Caco-2 (cell line): ENCODE measurements at regions of chr3 and their contacts with region 1.

Region 1: GRCh38 chr3:56042326-56042951 is 425.8 kb downstream of the ERC2 start:
- DNase-seq: peak in 1 of 2 experiments; percentile 47
- H3K4me3 ChIP-seq: no peak overlapping the region
- H3K4me3 Mint-ChIP-seq: no peak overlapping the region
- H3K27ac Mint-ChIP-seq: no peak overlapping the region
- H3K4me1 ChIP-seq: peaks cover 36% of the 10 kb centered on the region
- H3K4me1 Mint-ChIP-seq: peaks cover 5% of the 10 kb centered on the region
- H3K27me3 ChIP-seq: no peaks in the 10 kb centered on the region
- H3K27me3 Mint-ChIP-seq: no peaks in the 10 kb centered on the region
- CTCF ChIP-seq: peak; percentile 55 to 56

Region 2: DNA sequence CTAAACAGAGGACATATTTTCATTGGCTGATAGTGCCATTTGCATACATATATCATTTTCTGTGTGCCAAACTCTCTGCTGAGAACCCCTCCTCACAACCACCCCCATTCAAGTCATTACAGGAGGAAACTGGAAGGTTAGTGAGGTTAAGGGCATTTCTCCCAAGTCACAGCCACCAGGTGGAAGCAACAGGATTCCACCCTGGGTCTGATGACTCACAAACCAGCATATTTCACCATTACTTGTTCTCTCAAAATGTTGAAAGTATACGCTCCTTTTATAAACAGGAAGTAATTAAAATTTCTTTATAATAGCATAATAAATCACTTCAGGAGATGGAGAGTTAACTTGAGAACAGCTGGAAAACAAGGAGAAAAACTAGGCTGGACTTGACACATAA is 156.7 kb before region 1 on chr3:
- CTCF ChIA-PET with region 1: no interaction called
- POLR2A ChIA-PET with region 1: no interaction called
- intact Hi-C with region 1: loop called (anchors 1 kb)
- DNase-seq: peak in 1 of 2 experiments; percentile 9
- H3K4me3 ChIP-seq: no peak overlapping the region
- H3K4me3 Mint-ChIP-seq: no peak overlapping the region
- H3K27ac Mint-ChIP-seq: no peak overlapping the region
- H3K4me1 ChIP-seq: no peaks in the 10 kb centered on the region
- H3K4me1 Mint-ChIP-seq: no peaks in the 10 kb centered on the region
- H3K27me3 ChIP-seq: no peaks in the 10 kb centered on the region
- H3K27me3 Mint-ChIP-seq: no peaks in the 10 kb centered on the region
- CTCF ChIP-seq: peak in 1 of 2 experiments; percentile 23

Region 3: GRCh38 chr3:56173601-56174000 is 131.2 kb after region 1 on chr3:
- CTCF ChIA-PET with region 1: no interaction called
- POLR2A ChIA-PET with region 1: no interaction called
- intact Hi-C with region 1: no loop called
- DNase-seq: no peak
- H3K4me3 ChIP-seq: no peak overlapping the region
- H3K4me3 Mint-ChIP-seq: no peak overlapping the region
- H3K27ac Mint-ChIP-seq: no peak overlapping the region
- H3K4me1 ChIP-seq: no peaks in the 10 kb centered on the region
- H3K4me1 Mint-ChIP-seq: peaks cover 6% of the 10 kb centered on the region
- H3K27me3 ChIP-seq: no peaks in the 10 kb centered on the region
- H3K27me3 Mint-ChIP-seq: no peaks in the 10 kb centered on the region
- CTCF ChIP-seq: no peak